ENCODE measurements at regions of chr15 and their contacts with region 1.

Region 1: DNA sequence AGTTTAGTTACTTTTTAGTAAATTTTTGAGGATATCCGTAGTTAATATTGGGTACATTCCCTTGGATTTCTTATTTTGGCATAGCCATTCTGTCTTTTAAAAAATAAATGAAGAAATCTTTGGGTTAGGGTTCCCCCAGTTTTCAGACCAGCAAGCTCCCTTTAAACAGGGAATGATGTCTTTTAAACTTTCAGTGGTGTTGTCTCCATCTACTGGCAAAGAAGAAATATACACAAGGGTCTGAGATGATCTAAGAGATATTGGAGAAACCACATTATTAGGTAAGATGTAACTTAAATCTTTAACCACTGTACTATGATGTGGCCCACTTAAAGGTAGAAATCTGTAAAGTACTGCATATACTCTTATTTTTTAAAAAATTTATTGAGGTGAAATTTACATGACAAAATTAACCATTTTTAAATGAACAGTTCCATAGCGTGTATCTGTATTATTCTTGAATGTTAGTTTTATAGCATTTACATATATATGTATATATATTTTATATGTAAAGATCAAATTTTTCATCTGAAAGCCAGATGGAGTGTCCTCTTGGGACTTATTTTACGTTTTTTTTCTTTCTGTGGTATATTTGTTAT is 35.1 kb upstream of the EIF3J start:
- DNase-seq: peak; percentile 48
- ATAC-seq: peak; percentile 70
- H3K4me3 ChIP-seq: no peak overlapping the region
- H3K27ac ChIP-seq: no peak overlapping the region
- H3K4me1 ChIP-seq: no peaks in the 10 kb centered on the region
- H3K27me3 ChIP-seq: no peaks in the 10 kb centered on the region
- CTCF ChIP-seq: peak; percentile 78

Region 2: DNA sequence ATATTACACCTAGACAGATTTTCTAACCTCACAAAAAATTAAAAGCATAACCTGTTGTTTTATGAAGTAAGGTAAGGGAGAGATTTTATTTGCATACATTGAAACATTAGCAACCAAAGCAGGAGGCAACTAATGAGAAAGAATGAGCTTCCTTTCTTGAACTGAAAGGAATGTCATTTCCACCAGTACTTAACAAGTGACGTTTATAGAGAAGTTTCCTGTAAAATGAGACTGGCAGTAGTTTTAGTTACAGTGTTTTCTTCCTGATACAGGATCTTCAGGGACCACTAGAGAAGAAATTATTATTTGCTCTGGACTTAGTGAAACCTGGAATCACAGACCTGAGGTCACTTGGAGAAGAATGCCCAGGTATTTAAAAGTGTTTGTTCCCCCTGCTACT is 279.4 kb before region 1 on chr15:
- CTCF ChIA-PET with region 1: no interaction called
- POLR2A ChIA-PET with region 1: no interaction called
- intact Hi-C with region 1: loop called (anchors 5 kb)
- DNase-seq: no peak
- ATAC-seq: no peak
- H3K4me3 ChIP-seq: no peak overlapping the region
- H3K27ac ChIP-seq: no peak overlapping the region
- H3K4me1 ChIP-seq: peaks cover 6% of the 10 kb centered on the region; the same call in 1 of the 2 replicates
- H3K27me3 ChIP-seq: no peaks in the 10 kb centered on the region
- CTCF ChIP-seq: no peak

Region 3: DNA sequence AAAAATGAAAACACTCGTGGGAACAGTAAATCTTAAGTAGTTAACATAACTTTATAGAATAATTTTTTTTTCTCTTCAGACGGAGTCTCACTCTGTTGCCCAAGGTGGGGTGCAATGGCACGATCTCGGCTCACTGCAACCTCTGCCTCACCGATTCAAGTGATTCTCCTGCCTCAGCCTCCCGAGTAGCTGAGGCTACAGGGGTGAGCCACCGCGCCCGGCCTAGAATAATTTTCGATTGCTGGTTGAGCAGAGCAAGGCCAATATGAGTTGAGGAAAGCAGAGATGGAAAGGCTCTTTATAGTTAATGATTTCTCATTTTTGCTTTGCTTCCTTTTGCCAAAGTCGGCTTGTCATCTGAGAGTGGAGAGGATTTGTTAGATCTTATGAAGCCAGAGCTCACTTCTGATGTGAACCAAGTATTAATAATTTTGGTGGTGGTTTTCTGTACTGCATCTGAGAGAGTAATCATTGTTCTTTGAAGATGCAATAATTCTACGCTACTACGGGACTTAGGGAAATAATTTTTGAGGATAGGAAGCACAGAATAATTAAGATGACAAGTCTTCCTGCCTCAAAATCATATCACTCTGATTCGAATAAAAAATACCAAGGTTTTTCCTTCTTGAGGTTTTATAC is 214.9 kb before region 1 on chr15:
- CTCF ChIA-PET with region 1: interaction called, 20 read pairs
- POLR2A ChIA-PET with region 1: no interaction called
- intact Hi-C with region 1: loop called (anchors 5 kb)
- DNase-seq: peak; percentile 22
- ATAC-seq: no peak
- H3K4me3 ChIP-seq: peak overlapping the region; percentile 87
- H3K27ac ChIP-seq: no peak overlapping the region
- H3K4me1 ChIP-seq: peaks cover 16% of the 10 kb centered on the region
- H3K27me3 ChIP-seq: no peaks in the 10 kb centered on the region
- CTCF ChIP-seq: no peak

Region 4: DNA sequence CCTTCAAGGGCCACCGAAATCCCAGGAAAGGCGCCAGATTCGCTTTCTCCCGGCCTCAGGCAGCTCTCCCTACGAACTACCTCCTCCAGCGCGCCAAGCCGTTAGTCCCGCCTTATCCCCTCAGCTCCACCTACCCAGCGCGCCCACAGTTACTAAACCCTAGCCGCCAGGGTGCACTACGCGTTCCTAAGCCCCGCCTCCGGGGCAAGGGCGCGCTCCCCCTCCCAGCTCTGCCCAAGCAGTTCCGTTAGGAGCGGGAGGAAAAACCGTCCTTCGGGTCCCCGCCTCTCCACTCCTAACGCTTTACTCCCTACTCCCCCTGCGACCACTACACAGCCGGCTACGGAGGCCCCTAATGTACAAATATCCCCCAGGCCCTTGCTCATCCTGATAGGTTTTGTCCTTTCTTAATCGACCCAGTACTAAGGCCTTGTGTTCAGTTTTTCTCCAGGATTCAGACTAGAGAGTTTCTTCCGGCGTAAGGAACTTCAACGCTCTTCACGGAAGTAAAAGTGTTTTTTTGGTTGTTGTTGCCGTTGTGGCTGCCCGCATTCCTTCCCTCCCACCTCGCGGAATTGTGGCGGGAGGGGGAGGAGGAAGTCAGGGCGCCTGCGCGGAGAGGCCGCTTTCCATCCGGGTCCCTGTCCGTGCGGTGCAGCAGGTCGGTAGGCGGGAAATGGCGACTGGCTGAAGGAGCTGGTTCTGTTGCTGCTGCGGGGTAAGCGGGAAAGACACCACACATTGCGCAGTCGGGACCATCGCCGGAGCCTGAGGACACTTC is 74.7 kb before region 1 on chr15 and contains the start of gene CTDSPL2:
- CTCF ChIA-PET with region 1: interaction called, 36 read pairs
- POLR2A ChIA-PET with region 1: no interaction called
- intact Hi-C with region 1: loop called (anchors 2 kb)
- DNase-seq: peak; percentile 99
- ATAC-seq: peak; percentile 95
- H3K4me3 ChIP-seq: peak within 1 kb of the TSS; percentile 95
- H3K27ac ChIP-seq: peak within 1 kb of the TSS; percentile 85
- H3K4me1 ChIP-seq: peaks cover 10% of the 10 kb centered on the region
- H3K27me3 ChIP-seq: no peaks in the 10 kb centered on the region
- CTCF ChIP-seq: peak; percentile 56
- total RNA-seq, gene CTDSPL2: 49.2 and 98.0 TPM in 2 replicates

Region 5: GRCh38 chr15:44471885-44472455 is 29.9 kb before region 1 on chr15:
- CTCF ChIA-PET with region 1: no interaction called
- POLR2A ChIA-PET with region 1: no interaction called
- intact Hi-C with region 1: no loop called
- DNase-seq: no peak
- ATAC-seq: no peak
- H3K4me3 ChIP-seq: no peak overlapping the region
- H3K27ac ChIP-seq: no peak overlapping the region
- H3K4me1 ChIP-seq: peaks cover 10% of the 10 kb centered on the region
- H3K27me3 ChIP-seq: no peaks in the 10 kb centered on the region
- CTCF ChIP-seq: no peak

Region 6: GRCh38 chr15:44489464-44489863 is 12.4 kb before region 1 on chr15:
- CTCF ChIA-PET with region 1: interaction called, 12 read pairs
- POLR2A ChIA-PET with region 1: interaction called, 3 read pairs
- intact Hi-C with region 1: no loop called
- DNase-seq: peak; percentile 87
- ATAC-seq: peak; percentile 91
- H3K4me3 ChIP-seq: no peak overlapping the region
- H3K27ac ChIP-seq: peak overlapping the region; percentile 33
- H3K4me1 ChIP-seq: peaks cover 28% of the 10 kb centered on the region
- H3K27me3 ChIP-seq: no peaks in the 10 kb centered on the region
- CTCF ChIP-seq: no peak

Region 7: GRCh38 chr15:45030743-45031142 is 528.9 kb after region 1 on chr15:
- CTCF ChIA-PET with region 1: no interaction called
- POLR2A ChIA-PET with region 1: no interaction called
- intact Hi-C with region 1: no loop called
- DNase-seq: no peak
- ATAC-seq: no peak
- H3K4me3 ChIP-seq: no peak overlapping the region
- H3K27ac ChIP-seq: no peak overlapping the region
- H3K4me1 ChIP-seq: no peaks in the 10 kb centered on the region
- H3K27me3 ChIP-seq: no peaks in the 10 kb centered on the region
- CTCF ChIP-seq: no peak

Measured in PC-3 (cell line).